ENCODE measurements at regions of chr17 and their contacts with region 1.

Region 1: DNA sequence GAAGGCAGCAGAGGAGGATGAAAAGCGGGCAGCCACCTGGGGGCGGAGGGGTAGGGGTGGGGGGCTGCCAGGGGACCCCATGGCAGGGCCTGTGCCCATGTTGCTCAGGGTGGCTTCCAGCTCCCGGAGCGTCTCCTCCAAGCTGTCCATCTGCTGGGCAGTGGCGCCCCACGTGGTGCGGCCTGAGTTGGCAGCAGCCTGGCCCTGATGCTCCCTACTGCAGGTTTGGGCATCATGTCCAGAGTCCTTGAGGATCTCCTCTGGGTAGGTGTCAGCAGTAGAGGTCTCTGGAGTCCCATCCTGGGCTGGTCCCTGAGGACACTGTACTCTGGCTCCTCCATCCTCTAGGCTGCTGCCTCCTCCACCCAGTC is 60.9 kb downstream of the SRCIN1 start:
- DNase-seq: no peak
- H3K4me3 ChIP-seq: no peak overlapping the region
- H3K27ac ChIP-seq: no peak overlapping the region
- H3K4me1 ChIP-seq: peaks cover 0 to 7% (median 0%) of the 10 kb centered on the region in 4 experiments; a peak in 2 of 7 replicates
- H3K27me3 ChIP-seq: no peaks in the 10 kb centered on the region; a peak in 1 of 7 replicates
- CTCF ChIP-seq: peak; percentile 50 to 57 (median 55)
- EP300 ChIP-seq: no peak
- POLR2A ChIP-seq: no peak
- RAD21 ChIP-seq: peak; percentile 41 to 60

Region 2: DNA sequence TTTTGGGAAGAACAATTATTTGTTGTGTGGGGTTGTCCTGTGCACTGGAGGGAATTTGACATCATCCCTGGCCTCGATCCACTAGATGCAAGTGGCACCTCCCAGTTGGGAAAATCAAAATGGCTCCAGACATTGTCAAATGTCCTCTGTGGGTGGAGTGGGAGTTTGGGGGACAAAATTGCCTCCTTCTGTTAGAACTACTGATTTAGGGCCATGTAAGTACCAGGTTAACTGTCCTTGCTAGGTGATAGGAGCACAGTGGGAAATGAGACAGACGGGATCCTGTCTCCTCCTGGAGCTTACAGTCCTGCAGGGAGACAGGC is 59.7 kb before region 1 on chr17:
- CTCF ChIA-PET with region 1: interaction called, 16 read pairs
- POLR2A ChIA-PET with region 1: no interaction called
- DNase-seq: no peak
- H3K4me3 ChIP-seq: no peak overlapping the region
- H3K27ac ChIP-seq: no peak overlapping the region
- H3K4me1 ChIP-seq: peaks cover 0 to 6% (median 4%) of the 10 kb centered on the region in 4 experiments; a peak in 3 of 7 replicates
- H3K27me3 ChIP-seq: no peaks in the 10 kb centered on the region
- CTCF ChIP-seq: no peak
- EP300 ChIP-seq: no peak
- POLR2A ChIP-seq: no peak
- RAD21 ChIP-seq: no peak

Measured in H1 (cell line).